CD8-positive, alpha-beta T cell (primary cell): ENCODE measurements at regions of chr10 and their contacts with region 1.

Region 1: DNA sequence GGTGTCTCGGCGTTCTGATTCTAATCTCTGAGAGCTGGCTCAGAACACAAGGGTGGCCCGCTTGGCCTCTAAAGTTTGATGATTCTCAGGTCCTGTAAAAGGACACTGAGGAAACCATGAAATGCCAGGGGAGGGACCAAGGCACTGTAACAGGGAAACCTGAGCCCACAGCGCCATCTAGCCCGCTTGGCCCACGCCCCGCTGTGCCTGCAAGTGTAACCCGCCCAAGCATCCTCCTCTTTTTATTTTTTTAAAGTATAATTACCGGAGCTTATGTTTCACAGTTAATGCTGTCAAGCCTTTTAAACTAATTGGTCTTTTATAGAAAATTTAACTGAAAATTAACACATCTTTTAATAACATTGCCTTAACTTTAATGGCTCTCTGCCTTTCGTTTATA is 734.7 kb downstream of the KCNMA1 start:
- DNase-seq: no peak
- ATAC-seq: no peak
- H3K4me3 ChIP-seq: no peak overlapping the region
- H3K4me3 Mint-ChIP-seq: no peak overlapping the region
- H3K27ac ChIP-seq: no peak overlapping the region
- H3K27ac Mint-ChIP-seq: no peak overlapping the region
- H3K4me1 ChIP-seq: no peaks in the 10 kb centered on the region
- H3K4me1 Mint-ChIP-seq: no peaks in the 10 kb centered on the region
- H3K27me3 ChIP-seq: no peaks in the 10 kb centered on the region
- H3K27me3 Mint-ChIP-seq: no peaks in the 10 kb centered on the region
- CTCF ChIP-seq: no peak

Region 2: GRCh38 chr10:76055963-76056362 is 847.0 kb before region 1 on chr10:
- CTCF ChIA-PET with region 1: no interaction called
- POLR2A ChIA-PET with region 1: no interaction called
- intact Hi-C with region 1: loop called in 1 of 2 experiments (anchors 5 kb)
- DNase-seq: no peak
- ATAC-seq: no peak
- H3K4me3 ChIP-seq: no peak overlapping the region
- H3K4me3 Mint-ChIP-seq: no peak overlapping the region
- H3K27ac ChIP-seq: no peak overlapping the region
- H3K27ac Mint-ChIP-seq: no peak overlapping the region
- H3K4me1 ChIP-seq: no peaks in the 10 kb centered on the region
- H3K4me1 Mint-ChIP-seq: no peaks in the 10 kb centered on the region
- H3K27me3 ChIP-seq: no peaks in the 10 kb centered on the region
- H3K27me3 Mint-ChIP-seq: no peaks in the 10 kb centered on the region
- CTCF ChIP-seq: no peak

Region 3: DNA sequence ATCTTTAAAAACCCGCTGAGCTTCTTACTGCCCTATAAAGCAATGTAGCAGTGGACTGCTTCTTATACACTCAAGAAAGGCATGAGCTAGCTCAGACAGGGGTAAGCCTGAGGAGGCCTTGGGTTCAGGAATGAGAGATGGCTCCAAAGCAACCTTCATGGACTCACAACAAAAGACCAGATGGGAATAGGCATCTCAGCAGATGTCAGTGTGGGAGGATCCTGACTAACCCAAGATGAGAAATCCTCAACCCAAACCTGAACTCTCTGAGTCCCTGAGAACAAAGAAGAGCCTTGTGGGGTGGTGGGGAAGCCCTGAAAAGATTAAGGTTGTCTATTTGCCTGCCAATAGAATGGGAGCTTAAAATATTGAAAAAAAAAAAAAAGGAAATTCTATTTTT is 72.7 kb before region 1 on chr10:
- CTCF ChIA-PET with region 1: no interaction called
- POLR2A ChIA-PET with region 1: no interaction called
- intact Hi-C with region 1: no loop called
- DNase-seq: no peak
- ATAC-seq: no peak
- H3K4me3 ChIP-seq: no peak overlapping the region
- H3K4me3 Mint-ChIP-seq: no peak overlapping the region
- H3K27ac ChIP-seq: no peak overlapping the region
- H3K27ac Mint-ChIP-seq: no peak overlapping the region
- H3K4me1 ChIP-seq: no peaks in the 10 kb centered on the region
- H3K4me1 Mint-ChIP-seq: no peaks in the 10 kb centered on the region
- H3K27me3 ChIP-seq: no peaks in the 10 kb centered on the region
- H3K27me3 Mint-ChIP-seq: peaks cover under 1% of the 10 kb centered on the region
- CTCF ChIP-seq: no peak

Region 4: GRCh38 chr10:78664929-78665553 is 1762.1 kb after region 1 on chr10:
- CTCF ChIA-PET with region 1: no interaction called
- POLR2A ChIA-PET with region 1: no interaction called
- intact Hi-C with region 1: no loop called
- DNase-seq: peak in 2 of 9 experiments; percentile 12 to 34
- ATAC-seq: no peak
- H3K4me3 ChIP-seq: no peak overlapping the region
- H3K4me3 Mint-ChIP-seq: no peak overlapping the region
- H3K27ac ChIP-seq: no peak overlapping the region
- H3K27ac Mint-ChIP-seq: no peak overlapping the region
- H3K4me1 ChIP-seq: no peaks in the 10 kb centered on the region
- H3K4me1 Mint-ChIP-seq: no peaks in the 10 kb centered on the region
- H3K27me3 ChIP-seq: no peaks in the 10 kb centered on the region
- H3K27me3 Mint-ChIP-seq: peaks cover 32% of the 10 kb centered on the region
- CTCF ChIP-seq: peak; percentile 25